Activated naive CD4-positive, alpha-beta T cell treated with anti-CD3 and anti-CD28 coated beads for 36 hours (primary cell): ENCODE measurements at regions of chr12 and their contacts with region 1.

Region 1: GRCh38 chr12:32365473-32366064 is 33.8 kb upstream of the FGD4 start:
- DNase-seq: peak; percentile 69
- H3K4me3 Mint-ChIP-seq: no peak overlapping the region
- H3K27ac Mint-ChIP-seq: no peak overlapping the region
- H3K4me1 Mint-ChIP-seq: no peaks in the 10 kb centered on the region
- H3K27me3 Mint-ChIP-seq: no peaks in the 10 kb centered on the region

Region 2: DNA sequence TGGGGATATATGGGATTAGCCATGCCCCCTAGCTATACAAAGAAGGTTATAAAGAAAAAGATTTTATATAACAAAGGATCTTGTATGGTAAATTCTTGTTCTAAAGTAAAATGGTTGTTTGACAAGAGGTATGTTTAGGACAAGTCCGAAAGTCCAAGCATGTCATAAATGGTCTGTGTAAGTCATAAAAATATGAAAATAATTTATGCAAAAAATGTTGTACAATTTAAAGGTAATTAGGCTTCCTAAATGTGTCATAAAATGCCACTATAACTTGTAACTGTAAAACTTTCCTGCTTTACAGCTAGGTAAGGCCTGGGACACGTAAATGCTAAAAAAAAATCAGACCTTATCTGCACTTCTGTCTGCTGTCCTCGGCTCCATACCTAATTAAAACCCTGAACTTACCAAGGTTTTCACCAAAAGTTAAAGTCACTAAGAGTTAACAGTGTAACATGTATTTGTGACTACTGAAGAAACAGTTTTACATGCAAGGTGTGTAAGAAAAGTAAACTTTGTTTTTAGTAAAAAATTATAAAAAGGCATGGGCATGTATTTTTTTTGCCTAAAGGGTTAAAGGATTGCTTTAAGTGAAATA is 516.4 kb before region 1 on chr12:
- CTCF ChIA-PET with region 1: no interaction called
- intact Hi-C with region 1: no loop called
- DNase-seq: no peak
- H3K4me3 Mint-ChIP-seq: no peak overlapping the region
- H3K27ac Mint-ChIP-seq: no peak overlapping the region
- H3K4me1 Mint-ChIP-seq: peaks cover 3% of the 10 kb centered on the region
- H3K27me3 Mint-ChIP-seq: no peaks in the 10 kb centered on the region

Region 3: GRCh38 chr12:32671930-32672780 is 306.6 kb after region 1 on chr12:
- CTCF ChIA-PET with region 1: interaction called, 3 read pairs
- intact Hi-C with region 1: loop called (anchors 1 kb)
- DNase-seq: peak; percentile 40
- H3K4me3 Mint-ChIP-seq: no peak overlapping the region
- H3K27ac Mint-ChIP-seq: no peak overlapping the region
- H3K4me1 Mint-ChIP-seq: no peaks in the 10 kb centered on the region
- H3K27me3 Mint-ChIP-seq: peaks cover 3% of the 10 kb centered on the region